PC-3 (cell line): ENCODE measurements at regions of chr1 and their contacts with region 1.

Region 1: DNA sequence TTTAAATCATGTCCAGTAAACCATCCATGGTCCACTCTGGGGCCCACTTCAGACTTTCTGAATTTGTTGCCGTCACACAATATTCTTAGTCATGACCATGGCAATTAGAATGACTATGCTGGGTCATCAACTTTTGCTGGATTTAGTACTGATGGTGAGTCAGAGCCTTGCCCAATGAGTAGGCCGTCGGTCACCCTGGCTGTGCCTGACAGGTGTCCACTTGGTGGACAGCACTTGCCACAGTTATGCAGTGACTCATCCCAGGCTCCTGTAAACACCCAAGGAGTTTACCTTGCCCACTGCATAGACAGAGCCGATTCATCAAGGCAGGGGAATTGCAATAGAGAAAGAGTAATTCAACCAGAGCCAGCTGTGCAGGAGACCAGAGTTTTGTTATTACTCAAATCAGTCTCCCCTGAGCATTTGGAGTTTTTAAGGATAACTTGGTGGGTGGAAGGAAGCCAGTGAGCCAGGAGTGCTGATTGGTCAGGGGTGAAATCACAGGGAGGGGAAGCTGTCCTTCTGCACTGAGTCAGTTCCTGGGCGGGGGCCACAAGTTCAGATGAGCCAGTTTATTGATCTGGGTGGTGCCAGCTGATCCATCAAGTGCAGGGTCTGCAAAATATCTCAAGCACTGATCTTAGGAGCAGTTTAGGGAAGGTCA is 333.8 kb downstream of the PTPRU start:
- DNase-seq: peak; percentile 99
- ATAC-seq: peak; percentile 98
- H3K4me3 ChIP-seq: no peak overlapping the region
- H3K27ac ChIP-seq: peak overlapping the region; percentile 96
- H3K4me1 ChIP-seq: peaks cover 31% of the 10 kb centered on the region
- H3K27me3 ChIP-seq: no peaks in the 10 kb centered on the region
- CTCF ChIP-seq: no peak

Region 2: DNA sequence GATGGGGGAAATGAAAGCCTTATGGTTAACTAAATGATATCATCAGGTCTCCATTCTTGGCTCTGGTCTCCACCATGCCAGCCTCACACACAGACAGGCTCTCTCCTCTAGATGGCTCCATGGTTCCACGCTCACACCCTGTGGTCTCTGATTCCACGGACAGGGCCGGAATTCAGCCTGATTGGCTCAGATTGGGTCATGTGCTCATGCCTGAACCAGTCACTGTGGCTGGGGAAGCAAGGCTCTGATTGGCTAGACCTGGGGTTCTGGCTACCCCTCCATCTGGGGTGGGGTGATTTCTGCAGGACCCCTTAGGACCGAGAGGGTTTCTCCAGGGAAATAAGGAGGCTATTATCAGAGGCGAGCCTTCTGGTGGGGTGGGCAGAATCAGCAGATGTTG is 56.7 kb before region 1 on chr1:
- CTCF ChIA-PET with region 1: no interaction called
- POLR2A ChIA-PET with region 1: no interaction called
- intact Hi-C with region 1: loop called (anchors 1 kb)
- DNase-seq: peak; percentile 85
- ATAC-seq: peak; percentile 99
- H3K4me3 ChIP-seq: no peak overlapping the region
- H3K27ac ChIP-seq: no peak overlapping the region
- H3K4me1 ChIP-seq: no peaks in the 10 kb centered on the region
- H3K27me3 ChIP-seq: 0 out of 2 replicates have a peak, but pooled peaks cover 7% of the 10 kb centered on the region
- CTCF ChIP-seq: peak; percentile 93

Region 3: DNA sequence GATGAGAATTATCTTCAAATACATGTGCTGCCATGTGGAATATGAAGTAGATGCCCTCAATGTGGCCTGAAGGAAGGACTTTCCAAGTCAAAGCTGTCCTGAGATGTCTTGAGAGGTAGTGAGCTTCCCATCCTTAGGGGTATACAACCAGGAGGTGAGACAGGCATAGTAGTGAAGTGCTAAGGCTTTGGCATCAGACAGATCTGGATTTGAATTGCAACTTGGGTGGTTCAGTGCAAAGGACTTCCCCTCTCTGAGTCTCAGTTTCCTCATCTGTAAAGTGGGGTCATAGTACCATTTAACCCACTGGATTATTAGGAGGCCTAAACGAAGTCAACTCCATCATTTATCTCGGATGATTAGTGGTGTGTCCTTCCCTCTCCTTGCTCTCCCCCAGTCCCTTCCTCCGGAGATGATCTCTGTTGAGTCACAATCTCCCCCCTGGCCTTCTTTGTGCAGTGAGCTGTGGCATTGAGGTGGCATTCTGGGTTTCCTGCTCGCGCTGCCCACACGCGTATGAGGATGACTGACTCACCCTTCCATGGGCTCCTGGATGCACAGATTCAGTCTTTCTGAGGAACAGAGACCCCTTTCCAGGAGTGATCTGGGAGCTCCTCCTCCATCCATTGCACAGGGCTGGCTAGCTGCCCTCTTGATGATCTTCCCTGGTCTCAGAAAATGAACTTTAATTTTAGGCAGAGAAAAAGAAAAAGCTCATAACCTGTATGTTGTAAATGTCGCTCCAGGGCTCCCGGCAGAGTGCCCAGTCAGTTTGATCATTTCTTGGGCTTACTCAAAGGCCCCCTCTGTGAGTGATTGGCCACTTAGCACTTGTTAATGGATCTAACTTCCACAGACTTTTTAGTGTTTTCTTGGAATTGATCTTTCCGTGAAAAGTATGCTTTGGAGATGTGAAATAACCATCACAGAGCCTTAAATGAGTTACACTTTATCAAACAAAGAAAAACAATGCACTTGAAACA is 20.8 kb after region 1 on chr1:
- CTCF ChIA-PET with region 1: no interaction called
- POLR2A ChIA-PET with region 1: no interaction called
- intact Hi-C with region 1: loop called (anchors 1 kb)
- DNase-seq: peak; percentile 97
- ATAC-seq: peak; percentile 94
- H3K4me3 ChIP-seq: no peak overlapping the region
- H3K27ac ChIP-seq: peak overlapping the region; percentile 86
- H3K4me1 ChIP-seq: peaks cover 38% of the 10 kb centered on the region
- H3K27me3 ChIP-seq: no peaks in the 10 kb centered on the region
- CTCF ChIP-seq: no peak

Region 4: DNA sequence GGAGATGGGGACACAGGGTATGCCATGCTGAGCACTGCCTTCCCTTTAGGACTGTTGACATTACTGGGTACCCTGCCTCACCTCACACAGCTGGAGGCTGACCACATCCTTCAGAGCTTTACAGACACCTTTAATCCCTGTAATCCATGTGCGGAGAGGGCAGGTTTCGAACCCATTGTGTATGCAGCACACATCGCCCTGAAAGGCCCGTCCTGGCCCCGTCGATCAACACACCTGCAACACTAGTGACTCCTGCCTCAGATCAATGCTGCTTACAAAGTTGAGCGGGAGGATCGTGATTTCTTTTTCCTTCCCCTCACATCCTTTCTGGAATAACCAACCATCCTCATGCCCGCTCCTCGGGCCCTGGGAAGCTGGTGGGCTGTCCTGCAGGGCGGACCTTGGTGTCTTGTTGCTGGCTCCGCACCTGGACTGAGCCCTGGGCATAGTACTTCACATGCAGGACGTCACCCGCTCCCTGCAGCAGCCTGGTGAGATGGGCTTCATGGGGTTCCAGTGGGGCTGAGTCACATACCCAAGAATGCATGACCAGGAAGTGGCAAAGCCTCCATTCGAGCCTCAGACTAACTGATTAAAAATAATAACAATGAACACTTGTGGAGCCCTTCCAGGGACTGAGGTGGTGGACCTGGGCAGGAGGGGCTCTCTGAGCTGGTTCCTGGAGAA is 69.8 kb after region 1 on chr1:
- CTCF ChIA-PET with region 1: no interaction called
- POLR2A ChIA-PET with region 1: no interaction called
- intact Hi-C with region 1: loop called (anchors 1 kb)
- DNase-seq: peak; percentile 76
- ATAC-seq: peak; percentile 70
- H3K4me3 ChIP-seq: no peak overlapping the region
- H3K27ac ChIP-seq: peak overlapping the region; percentile 58
- H3K4me1 ChIP-seq: peaks cover 45% of the 10 kb centered on the region
- H3K27me3 ChIP-seq: no peaks in the 10 kb centered on the region
- CTCF ChIP-seq: no peak

Region 5: DNA sequence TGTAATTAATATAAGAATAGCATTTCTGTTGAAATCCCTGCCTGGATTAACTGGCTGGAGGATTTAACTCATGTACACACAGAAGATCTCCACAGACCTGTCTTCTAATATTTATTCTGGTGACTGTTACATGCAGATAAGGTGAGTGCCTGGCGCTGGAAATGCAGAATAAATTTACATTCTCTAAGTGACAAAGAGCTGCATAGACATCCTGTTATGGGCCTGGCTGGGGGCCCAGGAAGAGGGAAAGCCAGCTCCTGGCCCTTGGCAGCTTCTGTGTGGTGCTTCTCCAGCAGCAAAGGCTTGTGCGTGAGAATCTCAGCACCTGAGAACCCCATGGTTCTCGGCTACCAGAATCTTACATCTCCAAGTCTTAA is 112.8 kb after region 1 on chr1:
- CTCF ChIA-PET with region 1: no interaction called
- POLR2A ChIA-PET with region 1: no interaction called
- intact Hi-C with region 1: loop called (anchors 1 kb)
- DNase-seq: peak; percentile 83
- ATAC-seq: peak; percentile 93
- H3K4me3 ChIP-seq: no peak overlapping the region
- H3K27ac ChIP-seq: peak overlapping the region; percentile 60
- H3K4me1 ChIP-seq: peaks cover 29% of the 10 kb centered on the region
- H3K27me3 ChIP-seq: no peaks in the 10 kb centered on the region
- CTCF ChIP-seq: no peak

Region 6: DNA sequence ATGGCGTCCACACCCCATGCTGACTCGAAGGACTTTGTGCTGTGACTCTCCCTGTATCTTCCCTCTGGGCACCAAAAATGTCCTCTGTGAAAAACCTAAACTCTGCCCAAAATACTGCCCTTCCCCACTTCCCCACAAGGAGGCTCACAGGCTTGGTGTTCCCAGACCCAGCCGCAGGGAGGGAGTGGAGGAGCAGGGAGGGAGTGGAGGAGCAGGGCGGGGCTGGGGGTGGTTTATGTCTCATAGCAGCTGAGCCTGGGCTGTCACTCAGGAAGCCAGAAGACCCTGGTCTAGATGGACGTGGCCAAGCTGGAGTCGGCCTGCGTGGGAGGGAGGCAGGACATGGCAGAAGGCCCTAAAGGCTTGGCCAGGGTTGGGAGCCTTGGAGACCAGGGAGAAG is 127.9 kb after region 1 on chr1:
- CTCF ChIA-PET with region 1: no interaction called
- POLR2A ChIA-PET with region 1: no interaction called
- intact Hi-C with region 1: loop called (anchors 2 kb)
- DNase-seq: peak; percentile 85
- ATAC-seq: peak; percentile 97
- H3K4me3 ChIP-seq: no peak overlapping the region
- H3K27ac ChIP-seq: no peak overlapping the region
- H3K4me1 ChIP-seq: peaks cover 10% of the 10 kb centered on the region
- H3K27me3 ChIP-seq: no peaks in the 10 kb centered on the region
- CTCF ChIP-seq: peak; percentile 84

Region 7: GRCh38 chr1:29708901-29709710 is 139.0 kb after region 1 on chr1:
- CTCF ChIA-PET with region 1: no interaction called
- POLR2A ChIA-PET with region 1: no interaction called
- intact Hi-C with region 1: loop called (anchors 2 kb)
- DNase-seq: peak; percentile 93
- ATAC-seq: peak; percentile 68
- H3K4me3 ChIP-seq: peak overlapping the region; percentile 14; the same call in 1 of the 2 replicates
- H3K27ac ChIP-seq: peak overlapping the region; percentile 98
- H3K4me1 ChIP-seq: peaks cover 52% of the 10 kb centered on the region
- H3K27me3 ChIP-seq: no peaks in the 10 kb centered on the region
- CTCF ChIP-seq: no peak

Region 8: GRCh38 chr1:29924017-29924431 is 353.9 kb after region 1 on chr1:
- CTCF ChIA-PET with region 1: no interaction called
- POLR2A ChIA-PET with region 1: no interaction called
- intact Hi-C with region 1: no loop called
- DNase-seq: no peak
- ATAC-seq: no peak
- H3K4me3 ChIP-seq: no peak overlapping the region
- H3K27ac ChIP-seq: no peak overlapping the region
- H3K4me1 ChIP-seq: no peaks in the 10 kb centered on the region
- H3K27me3 ChIP-seq: peaks cover 9% of the 10 kb centered on the region; the same call in 1 of the 2 replicates
- CTCF ChIP-seq: no peak